ENCODE measurements at regions of chr10 and their contacts with region 1.

Region 1: DNA sequence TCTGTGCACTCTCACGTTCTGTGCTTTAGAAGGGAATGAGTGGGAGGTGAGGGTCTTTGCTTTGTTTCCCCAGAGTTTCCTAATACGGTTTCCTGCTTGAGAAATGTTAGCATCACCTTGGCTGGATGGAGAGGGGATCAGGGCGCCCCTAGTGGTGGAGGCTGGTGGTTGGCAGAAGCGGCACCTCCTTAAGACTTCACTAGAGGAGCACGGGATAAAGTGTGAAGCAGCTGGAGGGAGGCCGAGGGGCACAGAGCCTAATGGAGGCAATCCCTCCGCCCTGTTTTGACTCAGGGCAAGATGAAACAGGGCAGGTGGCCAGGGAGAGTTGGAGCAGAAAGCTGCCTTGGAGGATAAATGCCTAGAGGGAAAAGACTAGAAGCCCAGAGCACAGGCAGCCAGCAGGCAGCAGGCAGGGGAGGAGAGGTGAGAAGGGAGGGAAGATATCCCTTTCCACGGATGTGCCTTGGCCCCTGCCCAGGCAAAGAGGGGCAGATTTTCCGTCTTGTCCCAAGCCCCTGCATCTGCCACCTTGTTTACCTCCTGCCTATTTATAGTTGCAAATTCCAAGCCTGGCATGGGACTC is 56.0 kb upstream of the BTRC start:
- DNase-seq: peak; percentile 38 to 55
- ATAC-seq: peak; percentile 72 to 85
- H3K4me3 ChIP-seq: no peak overlapping the region
- H3K27ac ChIP-seq: peak overlapping the region; percentile 36 to 83 (median 54)
- H3K4me1 ChIP-seq: peaks cover 4 to 20% of the 10 kb centered on the region in 2 donors
- H3K27me3 ChIP-seq: no peaks in the 10 kb centered on the region
- CTCF ChIP-seq: peak; percentile 55 to 94 (median 83)
- POLR2A ChIP-seq: no peak

Region 2: DNA sequence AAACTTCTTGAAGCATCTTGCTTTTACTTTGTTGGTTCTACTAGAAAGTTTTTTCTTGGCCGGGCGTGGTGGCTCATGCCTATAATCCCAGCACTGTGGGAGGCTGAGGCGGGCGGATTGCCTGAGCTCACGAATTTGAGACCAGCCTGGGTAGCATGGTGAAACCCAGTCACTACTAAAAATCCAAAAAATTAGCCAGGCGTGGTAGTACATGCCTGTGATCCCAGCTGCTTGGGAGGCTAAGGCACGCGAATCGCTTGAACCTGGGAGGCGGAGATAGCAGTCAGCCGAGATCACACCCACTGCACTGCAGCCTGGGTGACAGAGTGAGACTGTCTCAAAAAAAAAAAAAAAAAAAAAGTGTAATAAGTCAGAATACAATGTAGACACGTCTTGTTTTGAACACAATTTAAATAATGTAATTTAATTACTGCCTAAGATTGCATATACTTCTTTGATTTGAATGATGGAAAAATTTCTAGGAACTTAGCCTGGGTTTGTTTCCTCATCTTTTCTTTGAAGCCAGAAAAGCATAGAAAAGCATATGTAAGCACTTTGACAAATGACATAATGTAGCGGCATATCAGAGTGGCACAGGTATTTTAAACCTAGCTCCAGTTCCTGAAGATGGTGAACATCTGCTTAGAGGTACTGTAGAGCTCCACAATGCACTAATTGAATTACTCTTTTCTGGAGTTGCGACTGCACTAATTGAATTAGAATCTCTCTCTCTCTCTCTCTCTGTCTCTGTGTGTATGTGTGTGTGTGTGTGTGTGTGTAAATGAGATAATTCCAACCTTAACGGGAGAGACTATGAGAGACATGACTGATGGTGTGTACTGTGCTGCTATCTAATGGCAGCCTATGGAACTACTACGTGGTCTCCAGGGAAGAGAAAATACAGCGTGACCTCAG is 143.8 kb after region 1 on chr10:
- in situ Hi-C with region 1: loop called in 2 of 4 experiments (anchors 10 to 25 kb)
- intact Hi-C with region 1: loop called (anchors 1 kb)
- DNase-seq: peak in 1 of 2 donors; percentile 13
- ATAC-seq: peak; percentile 82 to 95
- H3K4me3 ChIP-seq: no peak overlapping the region
- H3K27ac ChIP-seq: no peak overlapping the region
- H3K4me1 ChIP-seq: peaks cover 17 to 18% of the 10 kb centered on the region in 2 donors
- H3K27me3 ChIP-seq: no peaks in the 10 kb centered on the region
- CTCF ChIP-seq: peak in 4 of 5 experiments; percentile 41 to 60 (median 56)
- POLR2A ChIP-seq: no peak

Region 3: GRCh38 chr10:101467286-101467770 is 169.3 kb after region 1 on chr10:
- in situ Hi-C with region 1: loop called in 2 of 4 experiments (anchors 10 kb)
- intact Hi-C with region 1: loop called (anchors 2 kb)
- DNase-seq: peak in 1 of 2 donors; percentile 18
- ATAC-seq: peak; percentile 65 to 90
- H3K4me3 ChIP-seq: no peak overlapping the region
- H3K27ac ChIP-seq: no peak overlapping the region
- H3K4me1 ChIP-seq: peaks cover 7 to 8% of the 10 kb centered on the region in 2 donors
- H3K27me3 ChIP-seq: no peaks in the 10 kb centered on the region
- CTCF ChIP-seq: peak; percentile 58 to 83 (median 75)
- POLR2A ChIP-seq: no peak